ENCODE measurements at regions of chr11 and their contacts with region 1.

Region 1: DNA sequence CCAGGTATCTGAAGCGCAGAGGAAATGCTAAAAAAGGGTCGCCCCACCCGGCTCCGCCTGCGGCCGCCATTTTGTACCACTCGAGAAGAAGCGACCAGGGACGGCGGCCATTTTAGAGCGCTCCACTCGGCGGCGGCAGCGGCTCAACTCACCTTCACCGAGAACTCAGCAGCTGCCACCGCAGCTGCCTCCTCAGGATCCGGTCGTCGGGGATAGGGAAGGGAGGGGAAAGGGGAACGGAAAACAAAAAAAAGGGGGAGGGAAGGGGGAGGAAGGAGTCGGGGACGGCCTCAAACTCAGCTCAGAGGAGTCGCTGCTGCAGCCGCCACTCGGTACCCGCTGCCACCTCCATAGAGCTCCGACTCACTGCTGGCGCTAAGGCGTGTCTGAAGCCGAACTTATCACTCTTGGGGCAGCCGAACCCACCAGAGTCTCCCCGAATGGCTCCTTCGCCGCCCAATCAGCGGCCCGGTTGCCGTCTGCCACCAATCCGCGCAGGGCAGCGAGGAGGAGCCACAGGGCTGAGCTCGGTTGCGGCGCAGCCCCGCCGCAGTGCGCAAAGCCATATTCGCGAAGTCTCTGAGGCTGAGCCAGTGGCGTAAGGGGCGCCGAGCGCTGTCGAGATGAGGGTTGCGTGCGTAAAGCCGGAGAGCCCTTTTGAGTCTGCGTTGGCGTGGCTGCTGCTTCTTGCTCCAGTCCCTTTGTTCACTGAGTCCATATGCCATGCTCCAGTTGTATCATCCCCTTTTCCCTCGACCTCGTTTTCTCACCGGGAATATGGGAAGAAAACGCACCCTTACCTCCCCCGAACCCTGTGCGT is at the start of gene EIF4G2:
- DNase-seq: peak; percentile 98 to 99
- ATAC-seq: peak; percentile 90 to 97 (median 92)
- H3K4me3 ChIP-seq: peak within 1 kb of the TSS; percentile 96
- H3K4me3 Mint-ChIP-seq: peak within 1 kb of the TSS; percentile 97
- H3K27ac ChIP-seq: peak within 1 kb of the TSS; percentile 95
- H3K27ac Mint-ChIP-seq: peak within 1 kb of the TSS; percentile 94 to 95
- H3K4me1 ChIP-seq: peaks cover 23% of the 10 kb centered on the region
- H3K4me1 Mint-ChIP-seq: peaks cover 42 to 47% of the 10 kb centered on the region in 2 donors
- H3K27me3 ChIP-seq: no peaks in the 10 kb centered on the region
- H3K27me3 Mint-ChIP-seq: peaks cover 3 to 15% of the 10 kb centered on the region in 2 donors
- CTCF ChIP-seq: no peak
- total RNA-seq, gene EIF4G2: 718 to 820 (median 751) TPM

Region 2: GRCh38 chr11:10750838-10751580 is 57.8 kb before region 1 on chr11 and contains the start of gene CTR9:
- intact Hi-C with region 1: loop called (anchors 2 kb)
- DNase-seq: peak; percentile 84 to 94
- ATAC-seq: peak; percentile 91 to 95 (median 94)
- H3K4me3 ChIP-seq: peak within 1 kb of the TSS; percentile 78
- H3K4me3 Mint-ChIP-seq: peak within 1 kb of the TSS; percentile 94
- H3K27ac ChIP-seq: peak within 1 kb of the TSS; percentile 47
- H3K27ac Mint-ChIP-seq: peak within 1 kb of the TSS; percentile 85 to 89
- H3K4me1 ChIP-seq: peaks cover 15% of the 10 kb centered on the region
- H3K4me1 Mint-ChIP-seq: peaks cover 17 to 23% of the 10 kb centered on the region in 2 donors
- H3K27me3 ChIP-seq: no peaks in the 10 kb centered on the region
- H3K27me3 Mint-ChIP-seq: no peaks in the 10 kb centered on the region
- CTCF ChIP-seq: no peak
- total RNA-seq, gene CTR9: 30.6 to 47.3 (median 38.0) TPM

Region 3: GRCh38 chr11:10823152-10823579 is 14.4 kb after region 1 on chr11:
- intact Hi-C with region 1: no loop called
- DNase-seq: peak in 1 of 2 donors; percentile 21
- ATAC-seq: peak in 2 of 3 donors; percentile 48 to 62
- H3K4me3 ChIP-seq: no peak overlapping the region
- H3K4me3 Mint-ChIP-seq: peak overlapping the region; percentile 25
- H3K27ac ChIP-seq: peak overlapping the region; percentile 20
- H3K27ac Mint-ChIP-seq: peak overlapping the region; percentile 64 to 81
- H3K4me1 ChIP-seq: no peaks in the 10 kb centered on the region
- H3K4me1 Mint-ChIP-seq: peaks cover 12 to 13% of the 10 kb centered on the region in 2 donors
- H3K27me3 ChIP-seq: no peaks in the 10 kb centered on the region
- H3K27me3 Mint-ChIP-seq: no peaks in the 10 kb centered on the region
- CTCF ChIP-seq: no peak

Region 4: GRCh38 chr11:10857709-10858438 is 49.1 kb after region 1 on chr11 and contains the start of gene ZBED5:
- intact Hi-C with region 1: loop called (anchors 1 kb)
- DNase-seq: peak; percentile 97 to 98
- ATAC-seq: peak; percentile 89 to 95 (median 89)
- H3K4me3 ChIP-seq: peak within 1 kb of the TSS; percentile 75
- H3K4me3 Mint-ChIP-seq: peak within 1 kb of the TSS; percentile 99
- H3K27ac ChIP-seq: peak within 1 kb of the TSS; percentile 94
- H3K27ac Mint-ChIP-seq: peak within 1 kb of the TSS; percentile 98 to 100
- H3K4me1 ChIP-seq: peaks cover 13% of the 10 kb centered on the region
- H3K4me1 Mint-ChIP-seq: peaks cover 37 to 47% of the 10 kb centered on the region in 2 donors
- H3K27me3 ChIP-seq: no peaks in the 10 kb centered on the region
- H3K27me3 Mint-ChIP-seq: no peaks in the 10 kb centered on the region
- CTCF ChIP-seq: no peak
- total RNA-seq, gene ZBED5: 40.0 to 61.3 (median 53.9) TPM

Region 5: DNA sequence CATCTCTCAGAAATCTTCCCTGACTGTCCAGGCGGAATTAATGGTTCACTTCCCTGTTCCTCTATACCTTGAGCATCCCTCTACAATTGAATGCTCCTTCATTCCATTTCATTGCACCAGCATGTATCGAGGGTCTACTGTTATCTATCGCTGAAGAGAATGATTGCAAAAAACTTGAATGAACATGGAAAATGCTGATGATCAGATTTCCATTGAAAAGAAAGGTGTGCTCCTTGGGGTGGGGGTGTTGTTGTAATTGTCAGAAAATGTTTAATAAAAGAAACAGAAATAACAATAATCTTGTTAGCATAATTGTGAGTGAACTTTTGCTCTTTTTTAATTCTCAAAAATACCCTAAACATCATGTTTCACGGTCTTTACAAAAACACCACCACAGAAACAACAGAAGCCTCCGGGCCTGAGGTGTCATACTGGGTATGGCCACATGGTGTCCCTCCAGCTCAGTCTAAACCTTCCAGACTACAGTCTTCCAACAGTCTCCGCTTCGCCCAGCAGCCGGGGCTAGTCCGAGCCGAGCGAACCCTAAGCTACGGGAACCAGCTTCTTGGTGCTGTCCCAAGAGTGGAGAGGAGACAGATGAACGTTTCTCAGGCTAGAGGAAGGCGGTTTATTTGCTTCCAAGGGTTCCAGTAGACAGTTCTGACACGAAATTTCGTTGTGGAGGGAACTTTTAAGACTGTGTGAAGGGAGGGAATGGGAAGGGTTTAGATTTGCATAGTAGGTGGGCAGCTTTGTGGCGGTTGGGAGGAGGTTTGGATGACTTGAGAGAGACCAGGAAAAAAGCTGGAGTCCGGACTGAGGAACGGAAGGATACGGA is 124.9 kb after region 1 on chr11:
- intact Hi-C with region 1: loop called (anchors 10 kb)
- DNase-seq: peak; percentile 72 to 90
- ATAC-seq: peak; percentile 87 to 92 (median 89)
- H3K4me3 ChIP-seq: peak overlapping the region; percentile 20
- H3K4me3 Mint-ChIP-seq: peak overlapping the region; percentile 78
- H3K27ac ChIP-seq: no peak overlapping the region
- H3K27ac Mint-ChIP-seq: peak overlapping the region in 1 of 2 donors; percentile 54
- H3K4me1 ChIP-seq: peaks cover 22% of the 10 kb centered on the region
- H3K4me1 Mint-ChIP-seq: peaks cover 8 to 22% of the 10 kb centered on the region in 2 donors
- H3K27me3 ChIP-seq: peaks cover 28% of the 10 kb centered on the region
- H3K27me3 Mint-ChIP-seq: peaks cover 43 to 49% of the 10 kb centered on the region in 2 donors
- CTCF ChIP-seq: peak; percentile 93

Measured in natural killer cell (primary cell).